ENCODE measurements at regions of chr11 and their contacts with region 1.

Region 1: GRCh38 chr11:69088676-69089146 is 40.0 kb downstream of the TPCN2 start:
- DNase-seq: peak; percentile 85
- H3K4me3 ChIP-seq: no peak overlapping the region
- H3K27ac ChIP-seq: no peak overlapping the region
- H3K4me1 ChIP-seq: no peaks in the 10 kb centered on the region
- H3K27me3 ChIP-seq: no peaks in the 10 kb centered on the region
- CTCF ChIP-seq: peak; percentile 87

Region 2: GRCh38 chr11:68950268-68950667 is 138.4 kb before region 1 on chr11:
- CTCF ChIA-PET with region 1: no interaction called
- POLR2A ChIA-PET with region 1: no interaction called
- intact Hi-C with region 1: loop called (anchors 5 kb)
- DNase-seq: peak; percentile 38
- H3K4me3 ChIP-seq: no peak overlapping the region
- H3K27ac ChIP-seq: no peak overlapping the region
- H3K4me1 ChIP-seq: no peaks in the 10 kb centered on the region
- H3K27me3 ChIP-seq: no peaks in the 10 kb centered on the region
- CTCF ChIP-seq: peak; percentile 46

Measured in A673 (cell line).